Sciatic nerve (tissue), 2 donors: ENCODE measurements at regions of chr15 and their contacts with region 1.

Region 1: DNA sequence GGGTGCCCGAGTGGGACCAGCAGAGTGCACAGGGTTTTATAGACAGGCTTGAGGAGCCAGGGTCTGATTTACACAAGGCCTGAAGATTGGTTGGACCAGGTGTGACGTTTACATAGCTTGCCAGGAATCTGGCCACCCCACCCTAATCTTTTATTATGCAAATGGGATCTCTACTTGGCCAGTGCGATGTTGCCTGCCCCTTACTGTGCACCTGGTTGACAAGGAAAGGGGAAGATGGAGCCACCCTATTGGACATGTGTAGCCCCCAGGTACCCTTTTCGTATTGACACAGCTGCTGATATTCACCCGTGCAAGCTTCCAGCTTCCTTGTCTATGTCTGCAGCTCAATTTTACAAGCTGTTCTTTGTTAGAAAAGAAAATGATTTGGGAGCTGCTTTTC is 132.0 kb downstream of the ARNT2 start:
- DNase-seq: no peak
- ATAC-seq: peak; percentile 61

Region 2: DNA sequence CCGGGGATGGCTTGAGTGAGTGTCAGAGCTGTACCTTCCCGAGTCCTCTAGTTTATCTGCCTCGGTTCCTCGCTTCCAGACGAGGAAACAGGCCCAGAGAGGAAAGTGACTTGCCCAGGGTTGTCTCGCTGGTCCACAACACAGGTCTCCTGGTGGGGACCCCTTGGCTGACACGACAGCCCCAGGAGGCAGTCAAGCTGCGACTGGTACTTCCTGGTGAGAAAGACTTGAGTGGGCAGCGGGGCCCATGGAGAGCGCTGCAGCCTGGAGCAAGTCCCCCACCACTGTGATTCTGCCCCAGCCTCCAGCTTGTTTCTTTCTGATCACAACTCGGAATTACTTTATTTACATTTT is 1971.5 kb before region 1 on chr15:
- intact Hi-C with region 1: loop called (anchors 5 kb)
- DNase-seq: no peak
- ATAC-seq: no peak

Region 3: GRCh38 chr15:80461356-80462095 is 74.7 kb before region 1 on chr15:
- intact Hi-C with region 1: no loop called
- DNase-seq: no peak
- ATAC-seq: peak; percentile 68